A673 (cell line): ENCODE measurements at regions of chr17 and their contacts with region 1.

Region 1: GRCh38 chr17:6913608-6914443 is 82.0 kb upstream of the ALOX12 start:
- DNase-seq: peak; percentile 88
- H3K4me3 ChIP-seq: peak overlapping the region; percentile 44
- H3K27ac ChIP-seq: no peak overlapping the region
- H3K4me1 ChIP-seq: no peaks in the 10 kb centered on the region
- H3K27me3 ChIP-seq: peaks cover 6% of the 10 kb centered on the region
- CTCF ChIP-seq: peak; percentile 89

Region 2: DNA sequence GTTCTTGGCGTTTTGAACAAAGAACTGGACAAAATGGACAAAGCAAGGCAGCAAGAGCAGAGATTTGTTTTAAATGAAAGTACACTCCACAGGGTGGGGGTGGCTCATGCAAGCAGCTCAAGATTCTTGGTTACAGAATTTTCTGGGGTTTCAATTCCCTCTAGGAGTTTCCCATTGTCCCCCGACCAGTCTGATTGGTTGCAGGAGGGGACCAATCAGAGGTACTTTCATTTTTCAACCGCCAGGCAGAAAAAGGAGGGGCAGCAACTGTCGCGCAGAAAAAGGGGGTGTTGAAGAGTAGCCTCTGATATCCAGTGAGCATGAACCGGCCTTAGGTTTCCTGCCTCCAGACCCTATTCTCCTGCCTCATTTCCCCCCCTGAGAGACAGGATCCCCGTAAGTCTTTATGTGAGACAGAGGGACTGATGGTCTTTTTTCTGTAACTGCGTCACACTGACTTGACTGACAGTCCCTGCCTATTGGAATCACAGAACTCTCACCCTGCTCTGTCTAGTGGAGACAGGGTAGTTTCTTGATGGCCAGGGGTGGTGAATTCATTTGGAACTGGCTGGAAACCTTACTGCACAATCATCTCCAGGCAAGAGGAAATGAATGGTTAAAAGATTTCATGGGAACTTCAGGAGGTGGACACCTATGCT is 22.7 kb after region 1 on chr17:
- CTCF ChIA-PET with region 1: interaction called, 10 read pairs
- POLR2A ChIA-PET with region 1: interaction called, 10 read pairs
- intact Hi-C with region 1: no loop called
- DNase-seq: peak; percentile 69
- H3K4me3 ChIP-seq: peak overlapping the region; percentile 47
- H3K27ac ChIP-seq: peak overlapping the region; percentile 12
- H3K4me1 ChIP-seq: no peaks in the 10 kb centered on the region
- H3K27me3 ChIP-seq: no peaks in the 10 kb centered on the region
- CTCF ChIP-seq: no peak

Region 3: DNA sequence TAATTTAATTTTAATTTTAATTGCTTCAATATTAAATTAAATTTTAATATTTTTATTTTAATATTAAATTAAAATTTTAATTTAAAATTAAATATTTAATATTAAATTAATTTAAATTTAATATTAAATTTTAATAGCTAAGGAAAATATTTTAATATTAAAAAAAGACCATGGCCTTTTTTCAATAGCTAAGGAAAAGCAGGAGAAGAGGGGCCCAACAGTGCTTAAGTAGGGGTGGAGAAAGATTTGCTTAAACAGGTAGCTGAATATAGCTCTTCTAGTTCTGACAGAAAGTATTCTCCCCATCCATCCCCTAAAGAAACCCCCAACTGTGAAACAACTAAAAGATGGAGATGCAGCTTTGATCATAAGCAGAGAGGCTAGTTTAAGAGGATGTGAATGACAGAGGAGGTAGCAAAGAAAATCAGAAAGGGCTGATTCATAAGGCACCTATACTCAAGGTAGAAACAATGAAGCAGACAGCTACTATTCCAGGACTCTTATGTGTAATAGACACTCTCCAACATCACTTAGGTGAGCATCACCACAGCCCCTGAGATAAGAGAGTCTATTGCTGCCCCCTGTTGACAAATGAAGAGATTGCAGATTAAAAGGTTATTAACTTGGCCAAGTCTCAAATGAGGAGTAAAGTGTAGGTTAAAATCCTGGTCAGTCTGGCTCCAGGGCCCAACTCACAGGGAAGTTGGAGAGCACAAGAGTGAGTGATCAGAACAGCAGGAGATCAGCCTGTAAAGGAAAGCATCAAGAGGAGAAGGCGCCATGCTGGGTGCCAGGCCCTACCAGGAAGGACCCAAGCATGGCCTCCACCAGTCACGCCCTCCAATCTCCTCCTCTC is 90.8 kb after region 1 on chr17:
- CTCF ChIA-PET with region 1: interaction called, 40 read pairs
- POLR2A ChIA-PET with region 1: no interaction called
- intact Hi-C with region 1: loop called (anchors 1 kb)
- DNase-seq: peak; percentile 87
- H3K4me3 ChIP-seq: no peak overlapping the region
- H3K27ac ChIP-seq: no peak overlapping the region
- H3K4me1 ChIP-seq: no peaks in the 10 kb centered on the region
- H3K27me3 ChIP-seq: no peaks in the 10 kb centered on the region
- CTCF ChIP-seq: peak; percentile 87

Region 4: GRCh38 chr17:7021993-7022778 is 108.4 kb after region 1 on chr17:
- CTCF ChIA-PET with region 1: interaction called, 7 read pairs
- POLR2A ChIA-PET with region 1: no interaction called
- intact Hi-C with region 1: loop called (anchors 5 kb)
- DNase-seq: peak; percentile 90
- H3K4me3 ChIP-seq: peak overlapping the region; percentile 21
- H3K27ac ChIP-seq: peak overlapping the region; percentile 11
- H3K4me1 ChIP-seq: peaks cover 4% of the 10 kb centered on the region
- H3K27me3 ChIP-seq: no peaks in the 10 kb centered on the region
- CTCF ChIP-seq: peak; percentile 96

Region 5: GRCh38 chr17:7060165-7060891 is 146.5 kb after region 1 on chr17:
- CTCF ChIA-PET with region 1: interaction called, 13 read pairs
- POLR2A ChIA-PET with region 1: no interaction called
- intact Hi-C with region 1: no loop called
- DNase-seq: peak; percentile 27
- H3K4me3 ChIP-seq: no peak overlapping the region
- H3K27ac ChIP-seq: no peak overlapping the region
- H3K4me1 ChIP-seq: no peaks in the 10 kb centered on the region
- H3K27me3 ChIP-seq: no peaks in the 10 kb centered on the region
- CTCF ChIP-seq: no peak

Region 6: GRCh38 chr17:7136266-7136877 is 222.5 kb after region 1 on chr17:
- CTCF ChIA-PET with region 1: interaction called, 3 read pairs
- POLR2A ChIA-PET with region 1: no interaction called
- intact Hi-C with region 1: loop called (anchors 5 kb)
- DNase-seq: peak; percentile 82
- H3K4me3 ChIP-seq: peak overlapping the region; percentile 38
- H3K27ac ChIP-seq: no peak overlapping the region
- H3K4me1 ChIP-seq: peaks cover 15% of the 10 kb centered on the region
- H3K27me3 ChIP-seq: no peaks in the 10 kb centered on the region
- CTCF ChIP-seq: peak; percentile 98